Activated CD4-positive, alpha-beta T cell treated with anti-CD3 and anti-CD28 coated beads, Interleukin-2, amount 10 ng/mL, durations not matched to agents 7 days and 5 days (primary cell): ENCODE measurements at regions of chr17 and their contacts with region 1.

Region 1: DNA sequence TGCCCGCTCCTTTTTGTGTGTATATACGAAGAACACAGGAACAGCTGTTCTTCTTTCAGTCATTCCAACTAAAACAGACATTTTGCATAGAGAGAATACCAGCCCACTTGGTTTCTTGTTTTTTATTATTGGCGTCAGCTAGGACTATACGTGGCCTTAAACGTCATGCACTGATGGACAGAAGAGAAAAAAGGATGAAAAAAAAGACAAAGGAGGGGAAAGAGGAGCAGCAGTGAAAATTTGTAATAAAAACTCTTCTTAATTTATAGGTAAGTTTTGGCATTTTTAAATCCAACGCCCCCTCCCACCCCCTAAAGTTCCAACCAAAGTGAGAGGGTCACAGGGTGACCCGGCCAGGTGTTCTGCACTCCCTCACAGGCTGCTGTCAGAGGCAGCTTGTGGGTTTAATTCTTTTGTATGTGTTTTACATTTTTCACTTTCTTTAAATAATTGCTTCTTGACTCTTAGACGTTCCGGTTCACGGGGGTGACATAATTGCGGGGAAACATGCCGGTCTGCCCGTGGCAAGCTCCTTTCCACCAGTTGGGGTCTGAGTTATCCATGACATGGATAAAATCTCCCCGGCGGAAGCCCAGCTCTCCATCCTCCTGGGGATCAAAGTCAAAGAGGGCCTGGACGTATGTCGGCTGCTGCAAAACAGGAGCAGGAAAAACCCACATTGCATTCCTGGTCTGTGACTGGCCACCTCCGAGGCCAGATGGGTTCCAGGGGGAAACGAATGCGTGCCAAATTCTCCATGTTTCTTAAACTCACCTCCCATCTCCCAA is 30.9 kb upstream of the SLC25A19 start:
- DNase-seq: no peak
- H3K4me3 Mint-ChIP-seq: no peak overlapping the region
- H3K27ac Mint-ChIP-seq: no peak overlapping the region
- H3K4me1 Mint-ChIP-seq: peaks cover 22% of the 10 kb centered on the region
- H3K27me3 Mint-ChIP-seq: no peaks in the 10 kb centered on the region

Region 2: DNA sequence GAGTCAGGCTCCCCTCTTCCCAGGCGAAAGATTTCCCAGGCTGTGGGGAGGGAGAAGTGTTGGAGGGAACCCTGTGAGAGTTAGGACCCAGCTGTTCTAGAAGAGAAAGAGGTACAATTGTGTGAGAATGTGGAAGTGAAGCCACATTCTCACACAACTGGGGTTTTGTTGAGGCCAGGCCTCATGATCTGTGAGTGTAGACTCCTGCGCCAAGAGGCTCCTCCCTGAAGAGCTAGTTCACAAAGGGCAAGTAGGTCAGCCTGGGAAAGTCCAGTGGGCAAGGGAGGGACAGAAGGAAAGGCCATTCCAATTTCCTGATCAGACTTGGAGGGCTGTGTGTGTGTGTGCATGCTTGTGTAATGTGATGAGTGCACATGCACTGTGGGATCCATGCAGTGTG is 622.6 kb before region 1 on chr17:
- CTCF ChIA-PET with region 1: no interaction called
- POLR2A ChIA-PET with region 1: no interaction called
- DNase-seq: no peak
- H3K4me3 Mint-ChIP-seq: no peak overlapping the region
- H3K27ac Mint-ChIP-seq: no peak overlapping the region
- H3K4me1 Mint-ChIP-seq: no peaks in the 10 kb centered on the region
- H3K27me3 Mint-ChIP-seq: peaks cover 13% of the 10 kb centered on the region

Region 3: DNA sequence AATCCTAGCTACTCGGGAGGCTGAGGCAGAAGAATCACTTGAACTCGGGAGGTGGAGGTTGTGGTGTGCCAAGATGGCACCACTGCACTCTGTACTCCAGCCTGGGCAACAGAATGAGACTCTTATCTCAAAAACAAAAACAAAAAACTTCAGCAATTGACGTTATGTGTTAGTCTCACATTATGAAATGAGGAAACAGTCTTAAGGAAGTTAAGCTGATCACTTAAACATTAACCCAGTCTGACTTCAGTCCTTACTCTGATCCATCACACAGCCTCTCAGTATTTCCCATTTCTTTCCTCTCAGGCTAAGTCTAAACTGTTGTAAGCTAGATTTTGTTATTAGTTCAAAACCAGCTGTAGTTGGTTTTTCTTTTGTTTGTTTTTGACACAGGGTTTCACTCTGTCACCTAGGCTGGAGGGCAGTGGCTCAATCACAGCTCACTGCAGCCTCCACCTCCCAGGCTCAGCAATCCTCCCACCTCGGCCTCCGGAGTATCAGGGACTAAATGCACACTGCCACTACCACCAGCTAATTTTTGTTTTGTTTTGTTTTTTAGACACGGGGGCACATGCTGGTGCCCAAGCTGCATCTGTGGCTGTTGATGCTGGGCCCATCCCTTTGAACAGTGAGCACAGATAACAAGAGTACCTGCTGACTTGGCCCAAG is 172.1 kb before region 1 on chr17:
- CTCF ChIA-PET with region 1: no interaction called
- POLR2A ChIA-PET with region 1: no interaction called
- DNase-seq: no peak
- H3K4me3 Mint-ChIP-seq: no peak overlapping the region
- H3K27ac Mint-ChIP-seq: no peak overlapping the region
- H3K4me1 Mint-ChIP-seq: peaks cover 35% of the 10 kb centered on the region
- H3K27me3 Mint-ChIP-seq: no peaks in the 10 kb centered on the region

Region 4: DNA sequence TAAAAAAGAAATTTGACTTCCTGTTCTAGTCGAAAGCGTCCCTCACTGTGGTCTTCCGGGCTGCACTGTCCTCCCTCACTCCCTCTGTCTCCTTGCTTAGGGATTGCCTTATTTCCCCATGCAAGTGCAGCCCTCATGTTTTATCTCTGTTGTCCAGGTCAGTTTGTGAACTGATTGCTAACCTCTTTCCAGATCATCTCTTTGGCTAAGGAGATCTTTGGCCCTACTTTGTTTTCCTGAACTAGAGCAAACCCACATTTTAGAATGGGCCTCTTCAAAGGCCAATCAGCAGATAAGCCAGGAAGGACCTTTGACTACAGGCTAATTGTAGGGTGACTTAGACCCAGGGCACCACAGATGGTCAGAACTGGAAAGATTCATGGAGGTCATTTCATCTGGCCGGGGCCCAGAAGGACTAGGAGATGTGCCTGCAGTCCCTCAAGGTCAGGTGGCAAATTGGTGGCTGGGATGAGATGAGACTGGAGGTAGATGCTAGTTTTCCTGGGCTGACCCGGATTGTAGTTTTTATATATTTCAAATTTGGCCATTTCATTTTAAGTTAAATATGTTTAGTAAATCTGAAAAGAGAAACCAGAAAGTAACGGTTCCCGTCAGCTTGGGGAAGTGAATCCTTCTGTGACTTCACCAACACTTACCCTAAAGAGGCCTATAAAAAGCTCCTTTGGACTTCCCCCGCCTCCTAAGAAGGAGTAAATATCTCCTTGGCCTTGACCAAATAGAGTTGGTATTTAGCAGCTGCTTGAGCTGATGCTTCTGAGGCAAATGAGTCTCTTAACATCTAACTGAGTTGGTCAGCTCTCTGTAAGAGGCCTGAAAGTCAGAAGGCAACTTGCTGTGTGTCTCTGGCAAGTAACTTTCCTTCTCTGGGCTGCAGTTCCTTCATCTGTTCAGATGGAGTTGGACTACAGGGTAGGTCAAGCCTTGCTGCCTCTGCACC is 24.6 kb before region 1 on chr17:
- CTCF ChIA-PET with region 1: interaction called, 10 read pairs
- POLR2A ChIA-PET with region 1: no interaction called
- DNase-seq: no peak
- H3K4me3 Mint-ChIP-seq: no peak overlapping the region
- H3K27ac Mint-ChIP-seq: peak overlapping the region; percentile 80
- H3K4me1 Mint-ChIP-seq: peaks cover 29% of the 10 kb centered on the region
- H3K27me3 Mint-ChIP-seq: no peaks in the 10 kb centered on the region

Region 5: DNA sequence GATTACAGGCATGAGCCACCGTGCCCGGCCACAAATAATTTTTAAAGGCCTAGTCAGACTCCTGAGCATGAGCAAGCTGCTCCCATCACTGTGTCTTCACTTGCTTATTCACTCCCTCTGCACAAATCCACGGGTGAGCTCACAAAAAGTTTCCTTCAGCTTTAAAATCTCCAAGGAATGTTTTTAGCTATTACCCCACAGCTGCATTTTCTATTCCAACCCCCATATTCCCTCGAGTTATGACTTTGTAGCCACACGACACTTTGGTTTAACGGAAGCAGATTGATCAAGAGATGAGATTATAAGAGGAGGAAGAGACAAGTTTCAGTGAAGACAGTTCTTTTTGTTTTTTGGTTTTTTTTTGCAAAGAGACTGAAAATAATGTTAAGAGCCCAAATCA is 18.2 kb after region 1 on chr17:
- CTCF ChIA-PET with region 1: interaction called, 19 read pairs
- POLR2A ChIA-PET with region 1: no interaction called
- DNase-seq: peak; percentile 27
- H3K4me3 Mint-ChIP-seq: peak overlapping the region; percentile 52
- H3K27ac Mint-ChIP-seq: peak overlapping the region; percentile 88
- H3K4me1 Mint-ChIP-seq: peaks cover 74% of the 10 kb centered on the region
- H3K27me3 Mint-ChIP-seq: no peaks in the 10 kb centered on the region

Region 6: GRCh38 chr17:75393523-75394331 is 73.6 kb after region 1 on chr17:
- CTCF ChIA-PET with region 1: interaction called, 12 read pairs
- POLR2A ChIA-PET with region 1: no interaction called
- DNase-seq: peak; percentile 86
- H3K4me3 Mint-ChIP-seq: peak overlapping the region; percentile 90
- H3K27ac Mint-ChIP-seq: peak overlapping the region; percentile 83
- H3K4me1 Mint-ChIP-seq: peaks cover 75% of the 10 kb centered on the region
- H3K27me3 Mint-ChIP-seq: no peaks in the 10 kb centered on the region

Region 7: GRCh38 chr17:75412455-75413317 is 92.6 kb after region 1 on chr17:
- CTCF ChIA-PET with region 1: interaction called, 10 read pairs
- POLR2A ChIA-PET with region 1: no interaction called
- DNase-seq: peak; percentile 83
- H3K4me3 Mint-ChIP-seq: peak overlapping the region; percentile 5
- H3K27ac Mint-ChIP-seq: peak overlapping the region; percentile 61
- H3K4me1 Mint-ChIP-seq: peaks cover 30% of the 10 kb centered on the region
- H3K27me3 Mint-ChIP-seq: peaks cover 7% of the 10 kb centered on the region